ENCODE measurements at regions of chr12 and their contacts with region 1.

Region 1: GRCh38 chr12:389139-390096 is at the start of gene KDM5A:
- DNase-seq: peak; percentile 82
- H3K4me3 Mint-ChIP-seq: peak within 1 kb of the TSS; percentile 94
- H3K27ac Mint-ChIP-seq: peak within 1 kb of the TSS; percentile 98
- H3K4me1 Mint-ChIP-seq: peaks cover 34% of the 10 kb centered on the region
- H3K27me3 Mint-ChIP-seq: no peaks in the 10 kb centered on the region
- total RNA-seq, gene KDM5A: 81.2 and 83.8 TPM in 2 replicates

Region 2: DNA sequence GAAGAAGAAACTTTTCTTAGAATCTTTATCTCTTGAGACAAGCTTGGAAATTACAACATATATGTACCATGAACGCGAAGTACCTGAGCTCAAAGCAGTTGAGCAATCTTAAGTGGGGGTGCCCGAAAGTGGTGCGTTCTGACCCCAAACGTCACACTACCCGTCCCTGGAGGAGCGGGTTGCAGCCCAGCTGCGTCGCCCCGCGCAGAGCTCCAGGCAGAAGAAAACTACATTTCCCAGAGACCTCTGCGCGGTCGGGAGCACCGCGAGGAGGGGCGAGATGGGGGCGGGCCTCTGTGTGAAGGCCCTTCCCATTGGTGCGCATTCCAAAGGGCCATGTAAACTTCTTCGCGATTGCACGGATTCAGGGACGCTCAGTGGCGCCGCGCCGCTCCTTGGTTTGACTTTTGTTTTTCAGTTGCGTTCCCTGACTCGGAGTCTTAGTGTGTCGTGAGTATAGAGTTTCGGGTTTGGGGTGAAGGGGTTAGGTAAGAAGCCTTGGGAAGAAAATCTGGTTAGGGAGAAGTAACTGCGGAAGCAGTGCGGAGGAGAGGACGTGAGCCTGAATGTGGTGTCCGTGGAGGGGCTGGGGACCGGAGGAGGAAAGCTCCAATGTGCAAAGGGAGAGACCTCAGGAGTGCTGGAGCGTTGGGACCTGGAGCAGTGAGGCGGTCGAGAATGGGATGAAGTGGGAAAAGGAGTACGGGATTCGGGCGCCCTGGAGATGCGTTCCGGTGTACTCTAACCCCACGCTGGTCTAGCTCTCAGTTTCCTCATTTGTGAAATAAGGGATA is 12.0 kb after region 1 on chr12 and contains the start of gene CCDC77:
- intact Hi-C with region 1: loop called (anchors 1 kb)
- DNase-seq: peak; percentile 93
- H3K4me3 Mint-ChIP-seq: no peak within 1 kb of the TSS
- H3K27ac Mint-ChIP-seq: no peak within 1 kb of the TSS
- H3K4me1 Mint-ChIP-seq: no peaks in the 10 kb centered on the region
- H3K27me3 Mint-ChIP-seq: no peaks in the 10 kb centered on the region
- total RNA-seq, gene CCDC77: 12.6 and 14.6 TPM in 2 replicates